ENCODE measurements at regions of chr21 and their contacts with region 1.

Region 1: DNA sequence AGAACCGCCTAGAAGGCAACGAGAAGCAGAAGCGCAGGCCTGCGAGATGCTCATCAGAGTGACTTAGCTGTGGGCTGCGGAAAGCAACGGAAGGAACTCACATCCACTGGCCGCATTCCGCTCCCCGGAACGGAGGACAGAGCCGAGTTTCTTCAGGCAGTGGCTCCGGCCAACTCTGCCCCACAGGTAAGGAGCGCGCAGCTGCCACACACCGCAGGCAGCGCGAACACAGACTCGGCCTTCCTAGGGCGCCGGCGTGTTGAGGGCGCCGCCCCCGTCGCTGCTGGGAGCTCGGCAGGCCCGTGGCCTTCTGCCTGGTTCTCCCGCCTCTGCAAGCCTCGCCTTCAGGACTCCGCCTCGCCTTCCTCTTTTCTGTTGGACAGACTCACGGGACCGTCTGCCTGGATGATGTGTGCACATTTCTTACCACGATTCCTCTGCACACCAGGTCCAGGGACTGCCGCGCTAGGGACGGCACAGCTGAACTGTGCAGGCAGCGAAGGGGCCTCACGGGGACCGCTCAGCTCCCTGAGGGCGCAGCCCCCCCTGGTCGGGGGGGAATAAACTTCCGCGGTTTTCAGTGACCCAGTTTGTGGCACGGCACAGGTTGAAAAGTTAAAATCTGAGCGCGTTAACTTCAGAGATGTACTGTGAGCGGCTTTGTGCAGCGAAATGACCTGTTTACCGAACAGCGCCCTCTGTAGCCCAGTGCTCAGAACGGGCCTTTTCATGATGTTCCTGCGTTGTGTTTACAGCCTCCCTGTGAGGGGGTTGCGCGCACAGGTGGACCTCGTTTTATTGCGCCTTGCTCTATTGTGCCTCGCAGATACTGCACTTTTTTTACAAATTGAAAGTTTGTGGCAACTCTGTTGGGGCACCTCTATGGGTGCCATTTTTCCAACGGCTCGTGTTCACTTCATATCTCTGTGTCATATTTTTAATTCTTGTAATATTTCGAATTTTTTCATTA is 15.8 kb downstream of the TCP10L start:
- DNase-seq: peak; percentile 93
- H3K4me3 Mint-ChIP-seq: peak overlapping the region; percentile 95
- H3K27ac Mint-ChIP-seq: peak overlapping the region; percentile 16
- H3K4me1 Mint-ChIP-seq: peaks cover 12% of the 10 kb centered on the region
- H3K27me3 Mint-ChIP-seq: peaks cover 8% of the 10 kb centered on the region

Region 2: DNA sequence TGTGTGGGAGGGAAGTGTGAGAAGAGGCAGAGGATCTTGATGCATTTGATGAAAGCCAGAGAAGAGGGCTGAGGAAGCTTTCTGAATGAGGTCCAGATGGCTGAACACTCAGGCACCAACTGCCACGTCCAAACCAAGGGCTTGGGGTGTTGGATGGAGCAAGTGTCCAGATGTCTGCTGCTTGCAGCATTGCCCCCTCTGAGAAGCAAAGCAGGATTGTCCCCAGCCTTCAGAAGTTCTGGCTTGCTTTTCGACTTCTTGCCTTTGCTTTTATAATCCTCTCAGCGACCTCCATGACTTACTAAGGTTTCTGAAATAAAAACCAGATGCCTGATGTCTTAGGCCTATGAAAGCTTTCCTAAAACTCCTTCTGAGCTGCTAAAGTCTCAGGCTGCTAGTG is 514.2 kb before region 1 on chr21:
- intact Hi-C with region 1: no loop called
- DNase-seq: no peak
- H3K4me3 Mint-ChIP-seq: no peak overlapping the region
- H3K27ac Mint-ChIP-seq: no peak overlapping the region
- H3K4me1 Mint-ChIP-seq: no peaks in the 10 kb centered on the region
- H3K27me3 Mint-ChIP-seq: no peaks in the 10 kb centered on the region

Region 3: GRCh38 chr21:32278518-32279376 is 290.8 kb before region 1 on chr21 and contains the start of gene MIS18A:
- intact Hi-C with region 1: loop called (anchors 5 kb)
- DNase-seq: peak; percentile 99
- H3K4me3 Mint-ChIP-seq: peak within 1 kb of the TSS; percentile 100
- H3K27ac Mint-ChIP-seq: peak within 1 kb of the TSS; percentile 98
- H3K4me1 Mint-ChIP-seq: peaks cover 32% of the 10 kb centered on the region
- H3K27me3 Mint-ChIP-seq: peaks cover 3% of the 10 kb centered on the region
- total RNA-seq, gene MIS18A: 27.8 and 31.3 TPM in 2 replicates

Region 4: DNA sequence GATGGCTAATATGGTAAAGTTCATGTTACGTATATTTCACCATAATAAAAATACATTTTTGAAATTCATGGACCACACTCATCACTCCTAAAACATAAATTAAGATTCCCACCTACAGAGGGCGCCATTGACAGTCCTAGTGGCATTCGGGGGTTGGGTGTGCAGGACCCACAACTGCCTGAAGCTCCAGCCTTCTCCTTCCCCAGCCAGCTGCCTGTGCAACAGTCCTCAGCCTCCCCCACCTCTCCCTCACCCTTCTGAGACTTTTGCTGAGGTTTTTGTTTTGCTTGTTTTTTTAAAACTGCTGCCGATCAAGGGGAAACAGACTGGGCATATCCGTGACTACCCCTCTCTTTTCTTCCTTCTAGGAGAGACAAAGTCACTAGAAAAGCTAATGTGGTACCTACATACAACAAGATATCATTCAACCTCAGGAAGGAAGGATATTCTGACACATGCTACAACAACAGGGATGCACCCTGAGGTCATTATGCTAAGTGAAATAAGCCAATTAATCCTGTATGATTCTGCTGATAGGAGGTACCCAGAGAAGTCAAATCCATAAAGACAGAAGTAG is 166.3 kb before region 1 on chr21:
- intact Hi-C with region 1: loop called (anchors 1 kb)
- DNase-seq: peak; percentile 88
- H3K4me3 Mint-ChIP-seq: no peak overlapping the region
- H3K27ac Mint-ChIP-seq: no peak overlapping the region
- H3K4me1 Mint-ChIP-seq: peaks cover 7% of the 10 kb centered on the region
- H3K27me3 Mint-ChIP-seq: peaks cover 18% of the 10 kb centered on the region

Region 5: GRCh38 chr21:32412162-32413014 is 157.2 kb before region 1 on chr21 and contains the start of gene EVA1C:
- intact Hi-C with region 1: loop called (anchors 1 kb)
- DNase-seq: peak; percentile 87
- H3K4me3 Mint-ChIP-seq: peak within 1 kb of the TSS; percentile 95
- H3K27ac Mint-ChIP-seq: peak within 1 kb of the TSS; percentile 94
- H3K4me1 Mint-ChIP-seq: peaks cover 16% of the 10 kb centered on the region
- H3K27me3 Mint-ChIP-seq: peaks cover 2% of the 10 kb centered on the region
- total RNA-seq, gene EVA1C: 6.0 and 8.2 TPM in 2 replicates

Region 6: DNA sequence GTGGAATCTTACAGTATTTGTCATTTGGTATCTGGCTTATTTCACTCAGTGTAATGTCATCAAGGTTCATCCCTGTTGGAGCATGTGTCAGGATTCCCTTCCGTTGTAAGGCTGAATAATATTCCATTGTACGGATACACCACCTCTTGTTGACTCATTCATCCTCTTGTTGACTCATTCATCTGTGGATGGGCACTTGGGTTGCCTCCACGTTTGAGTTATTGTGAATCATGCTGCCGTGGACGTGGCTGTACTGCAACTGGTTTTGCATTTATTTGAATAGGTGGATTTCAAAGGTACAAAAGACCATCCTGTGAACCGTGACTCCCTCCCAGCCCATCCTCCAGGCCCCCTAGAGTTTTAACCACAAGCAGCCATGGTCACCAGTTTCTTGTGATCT is 27.7 kb after region 1 on chr21:
- intact Hi-C with region 1: no loop called
- DNase-seq: no peak
- H3K4me3 Mint-ChIP-seq: no peak overlapping the region
- H3K27ac Mint-ChIP-seq: peak overlapping the region; percentile 10
- H3K4me1 Mint-ChIP-seq: peaks cover 6% of the 10 kb centered on the region
- H3K27me3 Mint-ChIP-seq: no peaks in the 10 kb centered on the region